ENCODE measurements at regions of chr3 and their contacts with region 1.

Region 1: GRCh38 chr3:120524171-120524923 is 71.8 kb upstream of the NDUFB4 start:
- DNase-seq: peak; percentile 73
- H3K4me3 ChIP-seq: no peak overlapping the region
- H3K27ac ChIP-seq: no peak overlapping the region
- H3K4me1 ChIP-seq: no peaks in the 10 kb centered on the region
- H3K27me3 ChIP-seq: no peaks in the 10 kb centered on the region
- CTCF ChIP-seq: no peak

Region 2: GRCh38 chr3:120477781-120478180 is 46.6 kb before region 1 on chr3:
- CTCF ChIA-PET with region 1: no interaction called
- dilution Hi-C with region 1: no loop called
- in situ Hi-C with region 1: no loop called
- intact Hi-C with region 1: loop called (anchors 1 kb)
- DNase-seq: no peak
- H3K4me3 ChIP-seq: no peak overlapping the region
- H3K27ac ChIP-seq: no peak overlapping the region
- H3K4me1 ChIP-seq: no peaks in the 10 kb centered on the region
- H3K27me3 ChIP-seq: no peaks in the 10 kb centered on the region
- CTCF ChIP-seq: no peak

Measured in mammary epithelial cell (primary cell).